Naive thymus-derived CD4-positive, alpha-beta T cell (primary cell): ENCODE measurements at regions of chr18 and their contacts with region 1.

Region 1: GRCh38 chr18:78006774-78007260 is 757.2 kb downstream of the GALR1 start:
- DNase-seq: no peak
- ATAC-seq: no peak
- H3K4me3 ChIP-seq: no peak overlapping the region
- H3K4me3 Mint-ChIP-seq: no peak overlapping the region
- H3K27ac ChIP-seq: no peak overlapping the region
- H3K27ac Mint-ChIP-seq: no peak overlapping the region
- H3K4me1 ChIP-seq: no peaks in the 10 kb centered on the region
- H3K4me1 Mint-ChIP-seq: peaks cover 0 to 2% (median 0%) of the 10 kb centered on the region in 7 donors
- H3K27me3 ChIP-seq: no peaks in the 10 kb centered on the region
- H3K27me3 Mint-ChIP-seq: peaks cover 0 to 35% (median 25%) of the 10 kb centered on the region in 5 donors

Region 2: GRCh38 chr18:77346208-77346810 is 660.5 kb before region 1 on chr18:
- CTCF ChIA-PET with region 1: no interaction called
- POLR2A ChIA-PET with region 1: no interaction called
- intact Hi-C with region 1: no loop called
- DNase-seq: no peak
- ATAC-seq: no peak
- H3K4me3 ChIP-seq: no peak overlapping the region
- H3K4me3 Mint-ChIP-seq: no peak overlapping the region
- H3K27ac ChIP-seq: no peak overlapping the region
- H3K27ac Mint-ChIP-seq: no peak overlapping the region
- H3K4me1 ChIP-seq: no peaks in the 10 kb centered on the region
- H3K4me1 Mint-ChIP-seq: peaks cover 0 to 7% (median 2%) of the 10 kb centered on the region in 7 donors
- H3K27me3 ChIP-seq: no peaks in the 10 kb centered on the region
- H3K27me3 Mint-ChIP-seq: peaks cover 0 to 17% (median 7%) of the 10 kb centered on the region in 5 donors

Region 3: GRCh38 chr18:77899972-77900754 is 106.7 kb before region 1 on chr18:
- CTCF ChIA-PET with region 1: no interaction called
- POLR2A ChIA-PET with region 1: no interaction called
- intact Hi-C with region 1: no loop called
- DNase-seq: peak; percentile 40 to 71 (median 58)
- ATAC-seq: peak; percentile 97
- H3K4me3 ChIP-seq: peak overlapping the region; percentile 39
- H3K4me3 Mint-ChIP-seq: peak overlapping the region; percentile 9 to 81 (median 62)
- H3K27ac ChIP-seq: no peak overlapping the region
- H3K27ac Mint-ChIP-seq: no peak overlapping the region
- H3K4me1 ChIP-seq: no peaks in the 10 kb centered on the region
- H3K4me1 Mint-ChIP-seq: peaks cover 0 to 11% (median 5%) of the 10 kb centered on the region in 7 donors
- H3K27me3 ChIP-seq: no peaks in the 10 kb centered on the region
- H3K27me3 Mint-ChIP-seq: peaks cover 15 to 33% (median 22%) of the 10 kb centered on the region in 5 donors

Region 4: GRCh38 chr18:77940566-77940965 is 66.3 kb before region 1 on chr18:
- CTCF ChIA-PET with region 1: no interaction called
- POLR2A ChIA-PET with region 1: no interaction called
- intact Hi-C with region 1: no loop called
- DNase-seq: no peak
- ATAC-seq: no peak
- H3K4me3 ChIP-seq: no peak overlapping the region
- H3K4me3 Mint-ChIP-seq: no peak overlapping the region
- H3K27ac ChIP-seq: no peak overlapping the region
- H3K27ac Mint-ChIP-seq: no peak overlapping the region
- H3K4me1 ChIP-seq: no peaks in the 10 kb centered on the region
- H3K4me1 Mint-ChIP-seq: no peaks in the 10 kb centered on the region
- H3K27me3 ChIP-seq: no peaks in the 10 kb centered on the region
- H3K27me3 Mint-ChIP-seq: peaks cover 0 to 26% (median 9%) of the 10 kb centered on the region in 5 donors

Region 5: GRCh38 chr18:77973745-77974144 is 33.1 kb before region 1 on chr18:
- CTCF ChIA-PET with region 1: no interaction called
- POLR2A ChIA-PET with region 1: no interaction called
- intact Hi-C with region 1: no loop called
- DNase-seq: no peak
- ATAC-seq: no peak
- H3K4me3 ChIP-seq: no peak overlapping the region
- H3K4me3 Mint-ChIP-seq: no peak overlapping the region
- H3K27ac ChIP-seq: no peak overlapping the region
- H3K27ac Mint-ChIP-seq: no peak overlapping the region
- H3K4me1 ChIP-seq: no peaks in the 10 kb centered on the region
- H3K4me1 Mint-ChIP-seq: no peaks in the 10 kb centered on the region
- H3K27me3 ChIP-seq: no peaks in the 10 kb centered on the region
- H3K27me3 Mint-ChIP-seq: peaks cover 0 to 26% (median 5%) of the 10 kb centered on the region in 5 donors

Region 6: DNA sequence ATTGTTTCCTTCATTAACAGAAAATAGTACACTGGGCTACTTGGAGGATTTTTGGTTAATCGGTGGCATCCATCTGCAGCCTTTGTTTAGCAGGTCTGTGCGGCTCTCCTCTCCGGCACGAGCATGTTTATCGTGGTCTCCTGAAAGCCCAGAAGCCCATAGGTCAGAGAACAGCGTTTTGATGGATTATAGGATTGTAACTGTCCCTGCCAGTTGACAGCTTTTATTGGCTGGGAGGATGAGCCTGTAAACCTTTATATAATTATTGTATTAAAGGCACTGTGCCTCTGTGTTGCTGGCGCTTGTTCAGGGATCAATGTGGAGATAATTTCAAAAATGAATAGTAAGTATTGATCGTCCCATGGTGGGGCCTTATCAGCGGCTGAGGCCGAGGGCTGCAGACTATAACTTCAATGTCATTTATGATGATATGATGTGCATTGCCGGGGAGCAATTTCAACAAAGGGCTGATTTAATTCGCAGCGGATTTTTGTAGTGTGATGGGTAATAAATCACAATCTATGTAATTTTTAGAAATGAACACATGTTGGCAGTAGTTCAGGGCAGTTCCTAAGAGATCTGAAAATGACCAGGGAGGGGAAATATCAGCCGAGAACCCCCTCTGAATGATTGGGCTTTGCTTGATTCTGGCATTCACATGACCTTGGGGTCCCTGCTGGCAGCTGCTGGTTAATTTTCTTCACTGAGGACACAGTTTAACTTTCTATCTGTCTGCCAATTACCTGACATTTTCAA is 21.1 kb before region 1 on chr18:
- CTCF ChIA-PET with region 1: interaction called, 10 read pairs
- POLR2A ChIA-PET with region 1: no interaction called
- intact Hi-C with region 1: no loop called
- DNase-seq: no peak
- ATAC-seq: no peak
- H3K4me3 ChIP-seq: no peak overlapping the region
- H3K4me3 Mint-ChIP-seq: no peak overlapping the region
- H3K27ac ChIP-seq: no peak overlapping the region
- H3K27ac Mint-ChIP-seq: no peak overlapping the region
- H3K4me1 ChIP-seq: no peaks in the 10 kb centered on the region
- H3K4me1 Mint-ChIP-seq: no peaks in the 10 kb centered on the region
- H3K27me3 ChIP-seq: no peaks in the 10 kb centered on the region
- H3K27me3 Mint-ChIP-seq: peaks cover 0 to 5% (median 0%) of the 10 kb centered on the region in 5 donors